Activated B cell treated with CpG ODN at 0.5 μM for 24 hours (primary cell): ENCODE measurements at regions of chr17 and their contacts with region 1.

Region 1: GRCh38 chr17:31269578-31269983 is 27.5 kb downstream of the OMG start:
- DNase-seq: no peak
- ATAC-seq: no peak
- H3K4me3 Mint-ChIP-seq: no peak overlapping the region
- H3K27ac Mint-ChIP-seq: no peak overlapping the region
- H3K4me1 Mint-ChIP-seq: no peaks in the 10 kb centered on the region
- H3K27me3 Mint-ChIP-seq: no peaks in the 10 kb centered on the region
- CTCF ChIP-seq: no peak

Region 2: GRCh38 chr17:31321481-31321880 is 51.9 kb after region 1 on chr17 and contains the start of gene EVI2A:
- CTCF ChIA-PET with region 1: interaction called, 4 read pairs
- POLR2A ChIA-PET with region 1: interaction called, 5 read pairs
- intact Hi-C with region 1: loop called (anchors 10 kb)
- DNase-seq: no peak
- ATAC-seq: peak; percentile 69
- H3K4me3 Mint-ChIP-seq: peak within 1 kb of the TSS; percentile 84
- H3K27ac Mint-ChIP-seq: peak within 1 kb of the TSS; percentile 96
- H3K4me1 Mint-ChIP-seq: peaks cover 41% of the 10 kb centered on the region
- H3K27me3 Mint-ChIP-seq: no peaks in the 10 kb centered on the region
- CTCF ChIP-seq: no peak
- total RNA-seq, gene EVI2A: 46.6 and 52.5 TPM in 2 replicates